GM23248 (cell line): ENCODE measurements at regions of chr1 and their contacts with region 1.

Region 1: GRCh38 chr1:234978397-234979295 is 150.0 kb downstream of the TOMM20 start:
- DNase-seq: peak; percentile 72
- H3K4me3 ChIP-seq: 0 out of 2 replicates have a peak overlapping the region, but pooled peaks have one; percentile 0
- H3K27ac ChIP-seq: peak overlapping the region; percentile 99
- H3K4me1 ChIP-seq: peaks cover 62% of the 10 kb centered on the region
- H3K27me3 ChIP-seq: no peaks in the 10 kb centered on the region

Region 2: GRCh38 chr1:234610348-234611152 is 368.1 kb before region 1 on chr1:
- in situ Hi-C with region 1: loop called (anchors 10 kb)
- DNase-seq: peak; percentile 99
- H3K4me3 ChIP-seq: peak overlapping the region; percentile 77
- H3K27ac ChIP-seq: peak overlapping the region; percentile 99
- H3K4me1 ChIP-seq: peaks cover 35% of the 10 kb centered on the region
- H3K27me3 ChIP-seq: no peaks in the 10 kb centered on the region

Region 3: GRCh38 chr1:234631721-234632125 is 346.9 kb before region 1 on chr1:
- in situ Hi-C with region 1: no loop called
- DNase-seq: peak; percentile 78
- H3K4me3 ChIP-seq: peak overlapping the region; percentile 10; the same call in 1 of the 2 replicates
- H3K27ac ChIP-seq: peak overlapping the region; percentile 73
- H3K4me1 ChIP-seq: peaks cover 39% of the 10 kb centered on the region
- H3K27me3 ChIP-seq: no peaks in the 10 kb centered on the region

Region 4: DNA sequence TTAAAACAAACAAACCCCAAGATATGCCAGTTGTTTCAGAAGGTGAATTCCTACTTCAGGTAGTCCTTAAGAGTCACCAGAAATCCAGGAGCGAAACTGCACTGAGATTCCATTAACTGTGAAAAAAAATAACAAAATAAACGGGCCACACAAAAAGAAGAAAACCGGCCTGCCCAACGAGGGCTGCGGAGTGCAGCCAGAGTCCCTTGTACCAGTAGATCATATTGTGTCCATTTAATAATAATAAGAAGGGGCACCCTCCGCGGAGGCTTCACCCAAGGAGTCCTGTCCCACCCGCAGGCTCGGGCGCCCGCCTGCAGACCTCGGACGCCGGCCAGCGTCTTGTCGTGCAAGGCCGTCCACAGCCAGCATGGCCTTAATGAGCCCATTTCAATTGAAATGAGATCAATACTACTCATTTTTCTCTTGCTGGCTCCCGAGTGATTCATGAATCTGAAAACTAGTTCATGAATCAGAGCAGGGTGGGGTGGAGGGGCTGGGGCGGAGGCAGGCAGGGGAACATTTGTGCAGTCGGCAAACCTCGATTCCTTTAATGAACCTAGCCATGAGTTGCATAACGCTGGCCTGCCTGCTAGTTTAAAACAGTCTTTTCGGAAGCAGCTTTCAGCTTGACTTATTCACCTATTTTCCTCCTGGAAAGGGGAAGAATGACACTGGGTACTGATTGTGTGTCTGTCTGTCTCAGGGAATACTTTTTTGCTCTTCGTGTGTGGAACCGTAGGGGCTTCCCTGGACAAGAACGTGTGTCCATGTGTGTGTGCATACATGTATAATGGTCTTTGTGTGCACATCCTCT is 255.5 kb before region 1 on chr1:
- in situ Hi-C with region 1: loop called (anchors 10 kb)
- DNase-seq: peak; percentile 97
- H3K4me3 ChIP-seq: peak overlapping the region; percentile 61
- H3K27ac ChIP-seq: peak overlapping the region; percentile 99
- H3K4me1 ChIP-seq: peaks cover 44% of the 10 kb centered on the region
- H3K27me3 ChIP-seq: no peaks in the 10 kb centered on the region